Activated T-helper 1 cell treated with anti-CD3 and anti-CD28 coated beads, Interleukin-12 subunit alpha, Interleukin-12 subunit beta, Interleukin-2, Interleukin-4 antibody, amounts not matched to agents 30 ng/mL and 10 ng/mL and 1 ng/mL, durations not matched to agents 14 hours and 24 hours and 36 hours (primary cell): ENCODE measurements at regions of chr14 and their contacts with region 1.

Region 1: GRCh38 chr14:95527387-95528002 is 7.4 kb upstream of the GLRX5 start:
- DNase-seq: no peak
- H3K4me3 Mint-ChIP-seq: peak overlapping the region; percentile 64
- H3K27ac Mint-ChIP-seq: peak overlapping the region; percentile 84
- H3K4me1 Mint-ChIP-seq: peaks cover 78% of the 10 kb centered on the region
- H3K27me3 Mint-ChIP-seq: no peaks in the 10 kb centered on the region

Region 2: GRCh38 chr14:95265106-95266094 is 262.1 kb before region 1 on chr14:
- intact Hi-C with region 1: loop called (anchors 1 kb)
- DNase-seq: peak; percentile 27
- H3K4me3 Mint-ChIP-seq: peak overlapping the region; percentile 5
- H3K27ac Mint-ChIP-seq: peak overlapping the region; percentile 32
- H3K4me1 Mint-ChIP-seq: peaks cover 39% of the 10 kb centered on the region
- H3K27me3 Mint-ChIP-seq: peaks cover 4% of the 10 kb centered on the region

Region 3: DNA sequence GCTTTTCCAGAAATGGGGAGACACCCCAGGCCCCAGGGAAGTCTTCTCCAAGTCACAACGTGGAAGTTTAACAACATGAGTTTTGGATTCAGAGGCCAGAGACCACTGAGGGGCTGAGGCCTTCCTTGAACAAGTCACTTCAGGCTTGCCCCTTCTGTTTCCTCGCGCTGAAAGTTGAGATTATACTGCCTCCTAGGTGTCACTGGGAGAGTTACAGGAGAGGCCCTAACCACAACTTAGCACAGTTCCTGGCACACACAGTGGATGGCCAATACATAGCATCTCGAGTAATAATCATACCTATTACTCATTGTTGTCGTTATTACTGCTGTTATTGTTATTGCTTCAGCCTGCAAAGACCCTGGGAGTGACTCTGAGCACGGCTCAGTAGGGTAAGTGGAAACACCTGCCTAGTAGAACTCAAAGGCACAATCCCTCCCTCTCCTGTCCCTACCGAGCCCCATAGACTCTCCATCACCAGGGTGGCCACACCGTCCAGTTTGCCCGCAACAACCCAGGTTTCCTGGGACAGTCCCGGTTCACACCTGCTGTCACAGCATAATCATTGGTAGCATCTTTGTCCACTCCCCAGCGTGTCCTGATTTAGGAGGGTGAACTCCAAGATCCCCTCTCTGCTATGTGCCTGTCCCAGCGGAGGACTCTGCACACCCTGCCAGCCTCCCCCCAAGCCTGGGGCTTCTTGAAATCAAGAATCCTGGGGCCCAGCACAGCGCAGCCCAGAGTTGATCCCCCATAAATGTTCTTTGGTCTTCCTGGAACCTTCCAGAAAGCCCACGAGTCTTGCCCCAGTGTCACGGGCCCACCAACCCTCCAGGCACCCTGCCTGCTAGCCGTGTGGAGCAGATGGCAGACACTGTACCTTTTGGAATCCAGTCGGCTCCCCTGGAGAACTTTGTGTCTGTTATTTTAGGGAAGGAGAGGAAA is 96.0 kb before region 1 on chr14:
- intact Hi-C with region 1: loop called (anchors 1 kb)
- DNase-seq: no peak
- H3K4me3 Mint-ChIP-seq: no peak overlapping the region
- H3K27ac Mint-ChIP-seq: peak overlapping the region; percentile 48
- H3K4me1 Mint-ChIP-seq: no peaks in the 10 kb centered on the region
- H3K27me3 Mint-ChIP-seq: no peaks in the 10 kb centered on the region

Region 4: DNA sequence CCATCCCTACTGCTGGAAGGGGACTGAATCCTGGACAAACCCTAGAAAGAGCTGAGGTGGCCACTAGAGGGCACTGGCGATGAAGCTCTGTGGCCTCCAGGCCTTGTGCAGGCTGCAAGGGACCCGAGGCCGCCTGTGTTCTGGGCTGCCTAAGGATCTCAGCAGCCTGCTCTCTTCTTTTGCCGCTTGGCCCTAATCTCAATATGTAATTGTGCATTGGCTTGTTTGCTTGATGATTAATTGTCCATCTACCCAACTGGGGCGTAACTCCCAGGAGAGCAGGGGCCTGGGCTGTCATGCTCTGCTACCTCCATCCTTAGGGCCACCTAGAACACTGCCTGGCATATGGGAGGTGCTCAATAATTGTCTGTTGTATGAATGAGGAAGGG is 84.9 kb before region 1 on chr14:
- intact Hi-C with region 1: loop called (anchors 1 kb)
- DNase-seq: peak; percentile 56
- H3K4me3 Mint-ChIP-seq: no peak overlapping the region
- H3K27ac Mint-ChIP-seq: peak overlapping the region; percentile 57
- H3K4me1 Mint-ChIP-seq: peaks cover 5% of the 10 kb centered on the region
- H3K27me3 Mint-ChIP-seq: no peaks in the 10 kb centered on the region

Region 5: GRCh38 chr14:95480109-95480886 is 47.2 kb before region 1 on chr14:
- intact Hi-C with region 1: loop called (anchors 1 kb)
- DNase-seq: peak; percentile 39
- H3K4me3 Mint-ChIP-seq: peak overlapping the region; percentile 27
- H3K27ac Mint-ChIP-seq: peak overlapping the region; percentile 96
- H3K4me1 Mint-ChIP-seq: peaks cover 33% of the 10 kb centered on the region
- H3K27me3 Mint-ChIP-seq: no peaks in the 10 kb centered on the region

Region 6: DNA sequence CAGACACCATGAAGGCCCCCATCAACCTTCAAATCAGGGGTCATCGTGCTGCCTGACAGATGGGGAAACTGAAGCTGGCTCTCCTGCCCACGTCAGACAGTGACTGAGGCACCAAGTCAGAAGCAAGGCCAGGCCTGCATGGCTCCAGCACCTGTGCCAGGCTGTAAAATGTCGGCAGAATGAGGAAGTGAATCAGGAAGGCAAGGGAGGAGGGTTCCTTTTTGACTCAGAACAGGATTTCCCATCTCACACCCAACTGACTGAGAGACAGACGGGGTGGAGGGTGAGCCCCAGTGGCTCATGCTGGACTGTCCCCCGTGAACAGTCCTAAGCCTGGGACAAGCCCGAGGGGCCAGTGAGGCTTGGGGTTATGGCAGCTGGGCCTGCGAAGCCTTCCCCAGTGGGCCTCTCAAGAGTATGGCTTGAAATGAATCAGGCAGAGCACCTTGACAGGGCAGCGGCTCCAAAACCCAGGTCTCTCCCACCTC is 31.9 kb before region 1 on chr14:
- intact Hi-C with region 1: loop called (anchors 1 kb)
- DNase-seq: no peak
- H3K4me3 Mint-ChIP-seq: peak overlapping the region; percentile 60
- H3K27ac Mint-ChIP-seq: peak overlapping the region; percentile 94
- H3K4me1 Mint-ChIP-seq: peaks cover 62% of the 10 kb centered on the region
- H3K27me3 Mint-ChIP-seq: no peaks in the 10 kb centered on the region

Region 7: DNA sequence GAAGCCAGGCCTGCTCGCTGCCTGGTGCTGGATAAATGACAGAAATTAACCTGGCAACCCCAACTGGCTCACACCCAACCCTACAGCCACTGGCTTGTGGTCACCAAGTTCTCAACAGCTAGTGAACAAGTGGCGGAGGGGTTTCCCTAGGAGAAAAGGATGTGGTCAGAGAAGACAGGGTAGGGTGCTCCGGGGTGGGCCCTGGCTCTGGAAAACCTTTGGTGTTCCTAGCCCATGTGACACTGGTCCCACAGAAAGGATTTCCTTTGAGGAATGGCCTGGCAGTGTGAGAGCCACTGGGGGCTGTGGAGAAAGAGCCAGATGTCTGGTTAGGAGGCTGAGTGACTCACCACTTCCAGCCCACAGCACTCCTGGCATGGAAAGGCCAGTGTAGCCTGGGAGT is 19.8 kb before region 1 on chr14:
- intact Hi-C with region 1: loop called (anchors 1 kb)
- DNase-seq: no peak
- H3K4me3 Mint-ChIP-seq: peak overlapping the region; percentile 30
- H3K27ac Mint-ChIP-seq: peak overlapping the region; percentile 72
- H3K4me1 Mint-ChIP-seq: peaks cover 84% of the 10 kb centered on the region
- H3K27me3 Mint-ChIP-seq: no peaks in the 10 kb centered on the region

Region 8: DNA sequence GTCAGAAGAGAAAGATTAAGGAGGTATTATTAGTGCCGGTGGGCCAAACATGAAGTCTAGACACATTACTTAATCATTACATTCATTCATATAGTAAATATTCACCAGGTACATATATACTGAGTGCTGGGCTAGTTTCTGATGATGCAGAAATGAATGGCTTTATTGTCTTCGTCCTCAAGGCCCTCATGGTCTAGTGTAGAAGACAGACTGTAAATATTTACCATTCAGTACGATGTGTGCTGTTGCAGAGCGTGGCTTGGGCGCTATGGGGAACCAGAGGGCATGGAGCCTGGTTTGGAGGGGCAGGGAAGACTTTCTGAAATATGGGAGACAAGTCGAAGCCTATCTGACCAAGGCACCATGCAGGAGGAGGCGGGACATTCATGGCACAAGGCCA is 121.7 kb after region 1 on chr14:
- intact Hi-C with region 1: no loop called
- DNase-seq: no peak
- H3K4me3 Mint-ChIP-seq: no peak overlapping the region
- H3K27ac Mint-ChIP-seq: no peak overlapping the region
- H3K4me1 Mint-ChIP-seq: no peaks in the 10 kb centered on the region
- H3K27me3 Mint-ChIP-seq: peaks cover 2% of the 10 kb centered on the region